WTC11 (cell line): ENCODE measurements at regions of chr17 and their contacts with region 1.

Region 1: DNA sequence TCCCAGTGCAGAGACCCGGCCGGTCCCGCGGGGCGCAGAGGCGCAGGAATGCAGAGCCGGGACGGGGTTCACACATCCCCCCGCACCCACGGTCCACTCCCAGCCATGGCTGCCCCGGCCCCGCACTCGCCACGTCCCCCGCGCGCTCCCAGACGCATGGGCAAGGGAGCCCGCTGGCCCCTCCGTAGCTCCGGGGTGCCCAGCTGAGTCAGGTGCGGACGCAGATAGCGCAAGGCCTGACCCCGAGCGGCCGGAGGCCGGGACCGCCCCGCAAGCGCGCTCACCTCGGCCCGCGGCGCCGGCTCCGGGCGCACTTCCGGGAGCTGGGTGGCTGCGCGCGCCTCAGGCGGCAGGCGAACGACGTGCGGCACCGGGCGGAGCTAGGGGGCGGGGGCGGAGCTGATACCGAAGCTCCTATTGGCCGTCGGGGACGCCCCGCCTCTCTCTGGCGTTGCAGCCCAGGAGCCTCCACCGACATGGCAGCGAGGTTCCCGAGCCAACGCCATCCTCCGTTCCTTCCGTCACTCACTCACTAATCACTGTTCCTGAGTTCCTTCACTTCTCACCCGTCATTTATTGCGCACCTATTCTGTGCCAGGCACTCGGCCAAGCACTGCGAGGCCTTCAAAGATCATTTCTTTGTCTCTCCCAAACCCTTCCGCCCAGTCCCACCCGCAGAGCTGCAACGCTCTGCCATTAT is at the start of gene ZNF18:
- DNase-seq: peak; percentile 96
- ATAC-seq: peak; percentile 97
- H3K4me3 Mint-ChIP-seq: peak within 1 kb of the TSS; percentile 96
- H3K27ac Mint-ChIP-seq: peak within 1 kb of the TSS; percentile 100
- H3K4me1 Mint-ChIP-seq: peaks cover 21% of the 10 kb centered on the region
- H3K27me3 Mint-ChIP-seq: no peaks in the 10 kb centered on the region
- CTCF ChIP-seq: no peak
- total RNA-seq, gene ZNF18: 10.5 to 13.3 TPM (median 10.8 TPM) in 3 replicates

Region 2: GRCh38 chr17:11980813-11981212 is 16.5 kb before region 1 on chr17:
- CTCF ChIA-PET with region 1: interaction called, 15 read pairs
- POLR2A ChIA-PET with region 1: interaction called, 4 read pairs
- DNase-seq: no peak
- ATAC-seq: no peak
- H3K4me3 Mint-ChIP-seq: no peak overlapping the region
- H3K27ac Mint-ChIP-seq: no peak overlapping the region
- H3K4me1 Mint-ChIP-seq: peaks cover 30% of the 10 kb centered on the region
- H3K27me3 Mint-ChIP-seq: no peaks in the 10 kb centered on the region
- CTCF ChIP-seq: 0 out of 2 replicates have a peak, but pooled peaks have one; percentile 9

Region 3: GRCh38 chr17:12007466-12007865 is 10.2 kb after region 1 on chr17:
- CTCF ChIA-PET with region 1: interaction called, 4 read pairs
- POLR2A ChIA-PET with region 1: interaction called, 10 read pairs
- DNase-seq: no peak
- ATAC-seq: no peak
- H3K4me3 Mint-ChIP-seq: no peak overlapping the region
- H3K27ac Mint-ChIP-seq: no peak overlapping the region
- H3K4me1 Mint-ChIP-seq: 0 out of 2 replicates have a peak, but pooled peaks cover 3% of the 10 kb centered on the region
- H3K27me3 Mint-ChIP-seq: no peaks in the 10 kb centered on the region
- CTCF ChIP-seq: no peak

Region 4: GRCh38 chr17:12020642-12021622 is 23.6 kb after region 1 on chr17 and contains the start of gene MAP2K4:
- CTCF ChIA-PET with region 1: interaction called, 15 read pairs
- POLR2A ChIA-PET with region 1: interaction called, 43 read pairs
- DNase-seq: peak; percentile 95
- ATAC-seq: peak; percentile 96
- H3K4me3 Mint-ChIP-seq: peak within 1 kb of the TSS; percentile 78
- H3K27ac Mint-ChIP-seq: 0 out of 2 replicates have a peak within 1 kb of the TSS, but pooled peaks have one; percentile 53
- H3K4me1 Mint-ChIP-seq: peaks cover 51% of the 10 kb centered on the region
- H3K27me3 Mint-ChIP-seq: peaks cover 12% of the 10 kb centered on the region
- CTCF ChIP-seq: no peak
- total RNA-seq, gene MAP2K4: 24.4 to 29.0 TPM (median 24.8 TPM) in 3 replicates

Region 5: GRCh38 chr17:12078791-12079190 is 81.5 kb after region 1 on chr17:
- CTCF ChIA-PET with region 1: no interaction called
- POLR2A ChIA-PET with region 1: no interaction called
- DNase-seq: no peak
- ATAC-seq: no peak
- H3K4me3 Mint-ChIP-seq: no peak overlapping the region
- H3K27ac Mint-ChIP-seq: no peak overlapping the region
- H3K4me1 Mint-ChIP-seq: peaks cover 10% of the 10 kb centered on the region
- H3K27me3 Mint-ChIP-seq: no peaks in the 10 kb centered on the region
- CTCF ChIP-seq: no peak

Region 6: DNA sequence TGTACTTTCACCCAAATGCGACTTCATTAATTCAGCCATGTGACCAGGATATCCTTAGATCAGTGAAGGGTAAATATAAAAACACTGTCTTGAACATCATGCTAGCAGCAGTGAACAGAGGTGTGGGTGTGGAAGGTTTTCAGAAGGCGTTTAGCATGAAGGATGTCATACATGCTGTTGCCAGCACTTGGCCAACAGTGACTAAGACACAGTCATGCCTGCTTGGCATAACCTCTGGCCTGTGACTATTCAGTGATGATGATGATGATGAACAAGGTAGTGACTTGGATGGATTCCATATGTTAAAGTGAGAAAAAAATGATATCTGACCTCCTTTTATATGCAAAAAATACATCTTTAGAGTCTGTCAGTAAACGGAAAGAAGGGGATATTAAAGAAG is 121.3 kb after region 1 on chr17:
- CTCF ChIA-PET with region 1: no interaction called
- POLR2A ChIA-PET with region 1: no interaction called
- DNase-seq: no peak
- ATAC-seq: no peak
- H3K4me3 Mint-ChIP-seq: no peak overlapping the region
- H3K27ac Mint-ChIP-seq: no peak overlapping the region; the same call in 1 of the 2 replicates
- H3K4me1 Mint-ChIP-seq: peaks cover 33% of the 10 kb centered on the region
- H3K27me3 Mint-ChIP-seq: no peaks in the 10 kb centered on the region
- CTCF ChIP-seq: no peak